ENCODE measurements at regions of chr11 and their contacts with region 1.

Region 1: DNA sequence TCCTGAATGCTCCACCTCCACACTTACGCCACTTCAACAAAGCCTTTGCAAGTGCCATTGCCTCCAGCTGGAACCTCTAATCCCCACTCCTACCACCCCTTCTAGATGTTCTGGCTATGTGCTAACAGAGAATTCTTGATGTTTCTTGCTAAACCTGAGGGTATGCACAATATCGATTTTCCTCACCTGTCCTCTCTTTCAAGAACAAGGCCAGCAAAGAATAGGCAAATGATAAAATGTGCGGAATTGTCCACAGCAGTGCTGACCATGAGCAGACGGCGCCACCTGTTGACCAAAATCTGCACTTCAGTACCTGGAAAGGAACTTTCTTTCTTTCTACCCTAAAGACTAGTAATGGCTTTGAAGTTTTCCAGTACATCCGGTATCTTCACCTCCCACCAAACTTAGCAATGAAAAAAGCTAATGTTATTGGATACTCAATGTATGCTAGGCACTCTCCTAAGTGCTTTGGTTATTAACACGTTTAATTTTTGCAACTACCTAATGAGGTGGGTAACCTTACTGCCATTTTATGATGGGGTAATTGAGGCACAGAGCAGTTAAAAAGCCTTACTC is 3.4 kb downstream of the TIMM10 start:
- DNase-seq: peak in 3 of 4 donors; percentile 61 to 74 (median 68)
- ATAC-seq: peak; percentile 49
- H3K4me3 ChIP-seq: no peak overlapping the region
- H3K27ac ChIP-seq: no peak overlapping the region
- H3K4me1 ChIP-seq: peaks cover 10 to 26% of the 10 kb centered on the region in 2 donors
- H3K27me3 ChIP-seq: no peaks in the 10 kb centered on the region
- CTCF ChIP-seq: peak; percentile 87 to 88

Region 2: DNA sequence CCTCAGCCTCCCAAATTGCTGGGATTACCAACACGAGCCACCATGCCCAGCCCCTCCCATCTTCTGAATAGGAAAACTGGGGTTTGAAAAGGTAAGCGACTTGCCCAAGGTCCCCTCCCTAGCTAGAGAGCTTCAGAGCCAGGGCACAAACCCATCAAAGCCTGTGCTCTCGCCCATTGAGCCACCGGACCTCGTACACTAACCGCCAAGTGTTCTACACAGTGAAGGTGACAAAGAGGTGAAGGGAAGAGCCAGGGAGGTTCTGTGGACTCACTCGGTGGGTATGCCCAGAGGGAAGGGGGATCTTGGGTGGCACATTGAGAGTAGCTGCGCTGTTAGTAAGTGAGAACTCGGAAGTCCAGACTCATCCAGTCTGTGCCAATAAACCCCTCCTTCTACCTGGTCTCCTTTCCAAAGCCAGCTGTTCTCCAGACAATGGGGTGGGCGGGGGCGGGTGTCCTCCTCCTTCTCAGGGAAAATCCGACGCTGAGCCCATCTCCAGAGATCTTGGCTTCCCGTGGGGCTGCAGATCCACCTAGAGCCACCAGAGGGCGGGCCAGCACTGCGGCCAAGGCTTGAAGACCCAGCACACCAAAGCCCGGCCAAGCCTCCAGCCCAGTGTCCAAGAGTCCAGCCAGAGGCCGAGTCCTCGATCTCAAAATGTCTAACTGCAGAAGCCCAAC is 70.0 kb before region 1 on chr11:
- intact Hi-C with region 1: loop called in 1 of 2 experiments (anchors 5 kb)
- DNase-seq: peak; percentile 85 to 96 (median 90)
- ATAC-seq: peak; percentile 93
- H3K4me3 ChIP-seq: no peak overlapping the region
- H3K27ac ChIP-seq: no peak overlapping the region
- H3K4me1 ChIP-seq: peaks cover 31 to 44% of the 10 kb centered on the region in 2 donors
- H3K27me3 ChIP-seq: peaks cover 11 to 53% of the 10 kb centered on the region in 2 donors
- CTCF ChIP-seq: peak; percentile 97 to 99

Region 3: GRCh38 chr11:57493507-57494503 is 33.3 kb before region 1 on chr11:
- intact Hi-C with region 1: loop called in 1 of 2 experiments (anchors 5 kb)
- DNase-seq: peak in 3 of 4 donors; percentile 55 to 89 (median 60)
- ATAC-seq: peak; percentile 90
- H3K4me3 ChIP-seq: no peak overlapping the region
- H3K27ac ChIP-seq: no peak overlapping the region
- H3K4me1 ChIP-seq: peaks cover 1 to 13% of the 10 kb centered on the region in 2 donors
- H3K27me3 ChIP-seq: no peaks in the 10 kb centered on the region
- CTCF ChIP-seq: peak; percentile 89 to 91

Measured in left lung (tissue), 14 donors.